A549 (cell line): ENCODE measurements at regions of chr2 and their contacts with region 1.

Region 1: GRCh38 chr2:63488118-63488713 is 100.1 kb downstream of the WDPCP start:
- DNase-seq: peak; percentile 8 to 48
- ATAC-seq: peak in 1 of 2 experiments; percentile 73; a peak in 3 of 6 replicates
- H3K4me3 ChIP-seq: no peak overlapping the region
- H3K27ac ChIP-seq: no peak overlapping the region
- H3K4me1 ChIP-seq: no peaks in the 10 kb centered on the region
- CTCF ChIP-seq: peak; percentile 92
- EP300 ChIP-seq: no peak
- POLR2A ChIP-seq: no peak
- RAD21 ChIP-seq: peak; percentile 68 to 76

Region 2: DNA sequence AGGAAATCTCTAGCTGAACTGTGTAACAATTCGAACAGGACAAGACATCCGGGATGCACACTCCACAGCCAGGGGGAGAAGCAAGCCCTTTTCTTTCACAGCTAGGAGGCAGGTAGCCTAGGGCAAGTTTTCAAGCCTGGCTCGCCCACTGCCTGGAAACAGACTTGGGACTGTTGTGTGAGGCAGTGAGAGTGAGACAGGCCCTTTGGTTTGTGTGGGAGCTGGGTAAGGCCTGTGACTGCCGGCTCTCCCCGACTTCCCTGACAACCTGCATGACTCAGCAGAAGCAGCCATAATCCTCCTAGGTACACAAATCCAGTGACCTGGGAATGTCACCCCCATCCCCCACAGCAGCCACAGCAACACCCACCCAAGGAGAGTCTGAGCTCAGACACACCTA is 79.7 kb before region 1 on chr2:
- CTCF ChIA-PET with region 1: no interaction called
- POLR2A ChIA-PET with region 1: no interaction called
- DNase-seq: peak in 1 of 2 experiments; percentile 20
- ATAC-seq: no peak
- H3K4me3 ChIP-seq: no peak overlapping the region
- H3K27ac ChIP-seq: peak overlapping the region; percentile 49 to 69; a peak in 5 of 6 replicates
- H3K4me1 ChIP-seq: peaks cover 7% of the 10 kb centered on the region
- CTCF ChIP-seq: no peak
- EP300 ChIP-seq: no peak
- POLR2A ChIP-seq: no peak
- RAD21 ChIP-seq: no peak

Region 3: DNA sequence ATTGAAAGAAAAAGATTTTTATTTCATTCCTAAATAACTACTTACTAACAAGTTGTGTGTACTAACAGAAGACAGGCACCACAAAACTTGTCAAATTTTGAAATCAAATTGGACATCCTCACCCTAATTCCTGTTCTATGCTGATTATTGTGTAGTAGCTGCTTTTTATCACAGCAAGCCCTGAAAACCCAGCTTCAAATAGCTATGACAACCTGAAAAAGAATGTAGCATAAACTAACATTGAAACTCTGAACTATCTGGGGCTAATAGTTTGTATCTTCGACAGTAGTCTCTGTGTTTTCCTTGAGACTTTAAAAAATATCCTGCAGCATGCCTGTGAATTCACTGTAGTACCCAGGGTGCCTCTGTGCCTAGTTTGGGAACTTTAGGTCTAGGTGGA is 22.6 kb before region 1 on chr2:
- CTCF ChIA-PET with region 1: interaction called, 10 read pairs
- POLR2A ChIA-PET with region 1: no interaction called
- DNase-seq: no peak
- ATAC-seq: no peak
- H3K4me3 ChIP-seq: no peak overlapping the region
- H3K27ac ChIP-seq: no peak overlapping the region
- H3K4me1 ChIP-seq: no peaks in the 10 kb centered on the region
- CTCF ChIP-seq: no peak
- EP300 ChIP-seq: no peak
- POLR2A ChIP-seq: no peak
- RAD21 ChIP-seq: no peak

Region 4: DNA sequence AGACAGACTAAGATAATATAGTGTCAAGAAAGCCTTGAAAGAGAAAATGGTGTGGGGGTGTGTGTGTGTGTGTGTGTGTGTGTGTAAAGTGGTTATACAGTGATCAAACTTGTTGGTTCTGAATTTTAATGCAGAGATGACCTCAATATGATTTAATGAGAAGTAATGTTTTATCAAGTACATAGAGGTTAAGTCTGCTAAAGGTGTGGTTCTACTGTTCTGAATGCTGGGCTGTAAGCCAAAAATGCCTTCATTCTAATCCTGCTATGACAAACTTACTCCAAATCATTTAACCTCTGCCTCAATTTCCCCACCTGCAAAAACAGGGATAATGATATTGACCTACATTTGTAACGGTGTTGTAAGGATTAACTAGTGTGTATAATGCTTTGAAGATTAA is 12.2 kb after region 1 on chr2:
- CTCF ChIA-PET with region 1: interaction called, 23 read pairs
- POLR2A ChIA-PET with region 1: no interaction called
- DNase-seq: no peak
- ATAC-seq: no peak
- H3K4me3 ChIP-seq: no peak overlapping the region
- H3K27ac ChIP-seq: no peak overlapping the region
- H3K4me1 ChIP-seq: no peaks in the 10 kb centered on the region
- CTCF ChIP-seq: no peak
- EP300 ChIP-seq: no peak
- POLR2A ChIP-seq: no peak
- RAD21 ChIP-seq: no peak

Region 5: GRCh38 chr2:64192125-64192479 is 703.9 kb after region 1 on chr2:
- CTCF ChIA-PET with region 1: no interaction called
- POLR2A ChIA-PET with region 1: no interaction called
- DNase-seq: no peak
- ATAC-seq: no peak
- H3K4me3 ChIP-seq: no peak overlapping the region
- H3K27ac ChIP-seq: no peak overlapping the region
- H3K4me1 ChIP-seq: no peaks in the 10 kb centered on the region
- CTCF ChIP-seq: no peak
- EP300 ChIP-seq: no peak
- POLR2A ChIP-seq: no peak
- RAD21 ChIP-seq: no peak